Natural killer cell (primary cell): ENCODE measurements at regions of chrX and their contacts with region 1.

Region 1: DNA sequence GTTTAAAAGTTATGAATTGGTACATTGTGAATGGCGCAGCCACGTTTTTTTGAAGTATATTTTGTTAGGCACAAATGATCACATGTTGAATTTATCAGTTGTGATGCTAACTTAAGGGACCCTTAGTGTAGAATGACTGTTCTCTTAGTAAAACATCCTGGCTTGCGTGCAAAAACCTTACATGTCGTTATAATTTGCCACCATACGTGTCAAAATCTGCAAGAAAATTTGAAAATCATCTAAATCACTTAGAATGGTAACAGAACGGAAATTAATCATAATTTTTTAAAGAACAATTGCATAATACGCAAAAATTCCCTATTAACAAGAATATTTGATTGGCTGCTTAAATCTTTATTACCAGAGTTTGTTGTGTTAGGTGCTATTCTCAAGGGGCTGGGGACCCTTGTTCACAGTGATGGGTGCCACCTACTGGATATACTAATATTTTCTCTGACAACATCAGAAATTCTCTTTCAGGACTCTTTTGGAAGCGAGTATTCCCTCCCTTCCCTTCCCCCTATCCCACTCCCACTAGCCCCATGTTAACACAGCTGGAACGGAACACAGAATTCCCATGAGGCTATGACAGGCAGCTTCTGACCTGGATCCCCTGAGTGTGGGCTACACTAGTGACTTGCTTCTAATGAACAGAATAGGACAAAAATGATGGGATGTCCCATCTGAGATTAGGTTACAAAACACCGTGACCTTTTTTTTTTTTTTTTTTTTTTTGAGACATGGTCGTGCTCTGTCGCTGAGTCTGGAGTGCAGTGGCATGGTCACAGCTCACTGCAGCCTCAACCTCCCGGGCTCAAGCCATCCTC is 71.8 kb downstream of the SUPT20HL2 start:
- DNase-seq: peak in 1 of 2 donors; percentile 52
- ATAC-seq: peak in 1 of 3 donors; percentile 34
- H3K4me3 ChIP-seq: no peak overlapping the region
- H3K4me3 Mint-ChIP-seq: no peak overlapping the region
- H3K27ac ChIP-seq: no peak overlapping the region
- H3K27ac Mint-ChIP-seq: no peak overlapping the region
- H3K4me1 ChIP-seq: no peaks in the 10 kb centered on the region
- H3K4me1 Mint-ChIP-seq: no peaks in the 10 kb centered on the region
- H3K27me3 ChIP-seq: no peaks in the 10 kb centered on the region
- H3K27me3 Mint-ChIP-seq: peaks cover 3 to 14% of the 10 kb centered on the region in 2 donors
- CTCF ChIP-seq: peak; percentile 20

Region 2: GRCh38 chrX:24069877-24070276 is 172.2 kb before region 1 on chrX:
- intact Hi-C with region 1: no loop called
- DNase-seq: no peak
- ATAC-seq: no peak
- H3K4me3 ChIP-seq: no peak overlapping the region
- H3K4me3 Mint-ChIP-seq: no peak overlapping the region
- H3K27ac ChIP-seq: no peak overlapping the region
- H3K27ac Mint-ChIP-seq: no peak overlapping the region
- H3K4me1 ChIP-seq: no peaks in the 10 kb centered on the region
- H3K4me1 Mint-ChIP-seq: no peaks in the 10 kb centered on the region
- H3K27me3 ChIP-seq: no peaks in the 10 kb centered on the region
- H3K27me3 Mint-ChIP-seq: no peaks in the 10 kb centered on the region
- CTCF ChIP-seq: no peak

Region 3: DNA sequence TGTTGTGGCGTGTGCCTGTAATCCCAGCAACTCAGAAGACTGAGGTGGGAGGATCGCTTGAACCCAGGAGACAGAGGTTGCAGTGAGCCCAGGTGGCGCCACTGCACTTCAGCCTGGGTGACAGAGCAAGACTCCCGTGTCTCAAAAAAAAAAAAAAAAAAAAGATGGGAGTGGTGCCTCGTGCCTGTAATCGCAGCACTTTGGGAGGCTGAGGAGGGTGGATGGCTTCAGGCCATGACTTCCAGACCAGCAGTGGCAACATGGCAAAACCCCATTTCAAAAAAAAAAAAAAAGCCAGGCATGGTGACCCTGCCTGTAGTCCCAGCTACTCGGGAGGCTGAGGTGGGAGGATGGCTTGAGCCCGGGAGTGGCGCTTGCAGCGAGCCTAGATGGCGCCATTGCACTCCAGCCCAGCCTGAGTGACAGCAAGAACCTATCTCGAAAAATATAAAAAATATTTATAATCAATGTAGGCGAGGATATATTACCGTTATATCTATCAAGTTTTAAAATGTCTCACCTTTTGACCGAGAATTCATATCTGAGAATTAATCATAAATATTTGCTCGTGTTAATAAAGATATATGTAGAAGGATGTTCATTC is 160.3 kb before region 1 on chrX:
- intact Hi-C with region 1: loop called (anchors 1 kb)
- DNase-seq: peak; percentile 16 to 73
- ATAC-seq: peak; percentile 54 to 86 (median 64)
- H3K4me3 ChIP-seq: no peak overlapping the region
- H3K4me3 Mint-ChIP-seq: no peak overlapping the region
- H3K27ac ChIP-seq: no peak overlapping the region
- H3K27ac Mint-ChIP-seq: no peak overlapping the region
- H3K4me1 ChIP-seq: peaks cover 4% of the 10 kb centered on the region
- H3K4me1 Mint-ChIP-seq: no peaks in the 10 kb centered on the region
- H3K27me3 ChIP-seq: no peaks in the 10 kb centered on the region
- H3K27me3 Mint-ChIP-seq: no peaks in the 10 kb centered on the region
- CTCF ChIP-seq: peak; percentile 36